HCT116 (cell line): ENCODE measurements at regions of chr18 and their contacts with region 1.

Region 1: GRCh38 chr18:9575558-9575957 is 38.8 kb downstream of the PPP4R1 start:
- DNase-seq: peak; percentile 89
- ATAC-seq: peak; percentile 96
- H3K4me3 ChIP-seq: no peak overlapping the region
- H3K27ac ChIP-seq: no peak overlapping the region
- H3K4me1 ChIP-seq: peaks cover 4 to 17% of the 10 kb centered on the region in 2 experiments; a peak in 3 of 4 replicates
- H3K27me3 ChIP-seq: no peaks in the 10 kb centered on the region
- CTCF ChIP-seq: peak; percentile 66 to 88 (median 87)
- POLR2A ChIP-seq: no peak
- RAD21 ChIP-seq: peak; percentile 88

Region 2: GRCh38 chr18:9673296-9674251 is 98.0 kb after region 1 on chr18:
- CTCF ChIA-PET with region 1: interaction called, 4 read pairs
- POLR2A ChIA-PET with region 1: no interaction called
- RAD21 ChIA-PET with region 1: interaction called in 1 of 2 experiments, 7 read pairs
- intact Hi-C with region 1: loop called (anchors 1 kb)
- DNase-seq: peak; percentile 90
- ATAC-seq: peak; percentile 90
- H3K4me3 ChIP-seq: peak overlapping the region in 1 of 2 experiments; percentile 40; a peak in 2 of 4 replicates
- H3K27ac ChIP-seq: peak overlapping the region; percentile 51
- H3K4me1 ChIP-seq: peaks cover 20 to 25% of the 10 kb centered on the region in 2 experiments
- H3K27me3 ChIP-seq: no peaks in the 10 kb centered on the region
- CTCF ChIP-seq: peak; percentile 20 to 48 (median 24); a peak in 4 of 6 replicates
- POLR2A ChIP-seq: no peak
- RAD21 ChIP-seq: peak; percentile 64

Region 3: DNA sequence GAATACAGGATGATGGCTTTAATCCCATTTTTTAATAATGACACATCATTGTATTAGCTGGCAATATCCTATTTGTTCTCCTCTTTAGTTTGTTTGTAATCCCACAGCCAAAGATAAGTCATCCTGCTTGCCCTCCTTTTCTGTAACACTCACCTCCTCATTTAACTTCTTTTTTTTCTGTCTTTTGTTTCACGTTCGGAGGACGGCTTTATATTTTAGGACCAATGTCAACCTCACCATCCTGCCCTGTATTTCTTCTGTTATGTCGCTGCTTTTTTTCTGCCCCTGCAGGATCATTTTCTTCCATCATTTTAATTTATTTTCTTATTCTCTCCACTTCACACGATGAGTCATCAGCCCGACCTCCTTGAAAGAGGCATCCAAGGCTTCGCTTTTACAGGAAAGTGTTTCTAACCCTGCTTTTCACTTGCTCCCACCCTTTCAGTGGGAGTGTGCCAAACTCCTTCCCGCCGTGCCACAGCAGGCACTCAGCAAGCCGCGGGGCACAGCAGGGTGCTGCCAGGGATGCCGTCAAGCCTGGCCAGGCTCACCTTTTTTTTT is 143.9 kb after region 1 on chr18:
- CTCF ChIA-PET with region 1: interaction called, 3 read pairs
- POLR2A ChIA-PET with region 1: no interaction called
- RAD21 ChIA-PET with region 1: no interaction called
- intact Hi-C with region 1: loop called (anchors 1 kb)
- DNase-seq: peak; percentile 80
- ATAC-seq: peak; percentile 80
- H3K4me3 ChIP-seq: peak overlapping the region; percentile 21 to 37; a peak in 3 of 4 replicates
- H3K27ac ChIP-seq: peak overlapping the region; percentile 64
- H3K4me1 ChIP-seq: peaks cover 31 to 42% of the 10 kb centered on the region in 2 experiments
- H3K27me3 ChIP-seq: no peaks in the 10 kb centered on the region
- CTCF ChIP-seq: no peak
- POLR2A ChIP-seq: no peak
- RAD21 ChIP-seq: peak; percentile 23

Region 4: DNA sequence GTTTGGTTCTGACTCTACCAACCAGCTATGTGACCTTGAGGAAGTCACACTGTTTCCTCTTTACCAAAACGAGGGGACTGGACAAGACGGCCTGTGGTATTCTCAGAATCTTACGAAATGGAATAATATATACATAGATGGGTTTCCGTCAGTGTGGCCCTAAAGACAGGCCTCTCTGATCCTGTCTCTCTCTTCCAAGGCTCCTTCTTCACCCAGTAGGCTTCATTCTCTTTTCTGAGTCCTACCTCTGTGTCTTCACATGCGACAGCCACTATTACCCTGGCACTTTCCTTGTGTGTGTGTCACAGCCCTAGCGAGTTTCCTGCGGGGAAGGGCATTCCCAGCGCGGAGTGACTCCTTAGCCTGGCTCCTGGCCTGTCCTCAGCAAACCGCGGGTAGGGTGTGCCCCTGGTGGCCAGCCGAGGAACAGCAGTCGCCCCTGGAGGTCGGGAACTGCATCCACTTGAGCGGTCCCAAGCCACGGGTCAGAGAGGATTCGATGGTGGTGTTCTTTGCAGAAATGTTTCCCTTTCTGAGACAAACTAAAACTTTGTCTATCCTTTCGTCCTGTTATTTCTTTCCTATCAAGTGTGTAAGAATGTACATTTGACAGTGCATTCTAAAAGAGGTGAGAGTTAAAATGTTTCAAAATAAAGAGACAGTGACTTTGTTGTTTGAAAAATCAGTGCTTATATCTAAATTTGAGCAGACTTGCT is 195.9 kb after region 1 on chr18:
- CTCF ChIA-PET with region 1: no interaction called
- POLR2A ChIA-PET with region 1: no interaction called
- RAD21 ChIA-PET with region 1: no interaction called
- intact Hi-C with region 1: loop called (anchors 5 kb)
- DNase-seq: peak; percentile 56
- ATAC-seq: peak; percentile 99
- H3K4me3 ChIP-seq: 0 out of 4 replicates have a peak overlapping the region, but pooled peaks of 1 of the 2 experiments have one; percentile 4
- H3K27ac ChIP-seq: no peak overlapping the region
- H3K4me1 ChIP-seq: peaks cover 0 to 20% of the 10 kb centered on the region in 2 experiments; a peak in 3 of 4 replicates
- H3K27me3 ChIP-seq: no peaks in the 10 kb centered on the region
- CTCF ChIP-seq: peak; percentile 69 to 99 (median 96)
- POLR2A ChIP-seq: no peak
- RAD21 ChIP-seq: peak; percentile 90

Region 5: GRCh38 chr18:9849407-9850281 is 274.1 kb after region 1 on chr18:
- CTCF ChIA-PET with region 1: no interaction called
- POLR2A ChIA-PET with region 1: no interaction called
- RAD21 ChIA-PET with region 1: no interaction called
- intact Hi-C with region 1: no loop called
- DNase-seq: no peak
- ATAC-seq: no peak
- H3K4me3 ChIP-seq: no peak overlapping the region
- H3K27ac ChIP-seq: no peak overlapping the region
- H3K4me1 ChIP-seq: peaks cover 0 to 3% of the 10 kb centered on the region in 2 experiments; a peak in 1 of 4 replicates
- H3K27me3 ChIP-seq: no peaks in the 10 kb centered on the region
- CTCF ChIP-seq: no peak
- POLR2A ChIP-seq: no peak
- RAD21 ChIP-seq: no peak